ENCODE measurements at regions of chr1 and their contacts with region 1.

Region 1: GRCh38 chr1:40338745-40339424 is 21.8 kb upstream of the COL9A2 start:
- DNase-seq: peak; percentile 73 to 80
- ATAC-seq: peak; percentile 86 to 95
- H3K4me3 ChIP-seq: peak overlapping the region; percentile 36
- H3K27ac ChIP-seq: no peak overlapping the region
- H3K4me1 ChIP-seq: no peaks in the 10 kb centered on the region
- CTCF ChIP-seq: peak; percentile 81
- EP300 ChIP-seq: no peak
- POLR2A ChIP-seq: no peak
- RAD21 ChIP-seq: peak; percentile 86 to 94

Region 2: DNA sequence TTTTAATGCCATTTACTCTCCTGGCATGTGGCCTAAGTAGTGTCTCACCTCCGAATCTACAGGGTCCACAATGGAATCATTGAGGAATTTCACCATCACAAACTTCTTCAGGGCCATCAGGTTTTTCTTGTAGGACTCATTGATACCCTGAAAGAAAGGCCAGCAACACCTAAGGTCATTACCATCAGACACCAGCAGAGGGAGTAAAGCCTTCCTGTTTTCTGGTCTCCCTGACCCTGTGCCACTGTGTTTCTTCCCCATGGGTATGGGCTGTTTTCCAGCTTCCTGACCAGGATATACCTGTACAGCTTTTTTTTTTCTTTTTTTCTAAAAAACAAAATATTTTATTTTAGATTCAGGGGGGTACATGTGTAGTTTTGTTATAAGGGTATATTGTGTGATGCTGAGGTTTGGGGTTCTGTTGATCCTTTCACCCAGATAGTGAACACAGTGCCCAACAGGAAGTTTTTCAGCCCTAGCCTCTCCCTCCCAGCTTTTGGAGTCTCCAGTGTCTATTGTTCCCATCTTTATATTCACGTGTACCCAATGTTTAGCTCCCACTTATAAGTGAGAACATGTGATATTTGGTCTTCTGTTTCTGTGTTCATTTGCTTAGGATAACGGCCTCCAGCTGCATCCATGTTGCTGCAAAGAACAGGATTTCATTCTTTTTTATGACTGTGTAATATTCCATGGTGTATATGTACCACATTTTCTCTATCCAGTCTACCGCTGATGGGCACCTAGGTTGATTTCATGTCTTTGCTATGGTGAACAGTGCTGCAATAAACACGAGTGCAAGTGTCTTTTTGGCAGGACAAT is 260.2 kb before region 1 on chr1:
- CTCF ChIA-PET with region 1: interaction called, 27 read pairs
- POLR2A ChIA-PET with region 1: no interaction called
- DNase-seq: peak; percentile 47 to 66
- ATAC-seq: peak; percentile 88 to 92
- H3K4me3 ChIP-seq: no peak overlapping the region
- H3K27ac ChIP-seq: no peak overlapping the region
- H3K4me1 ChIP-seq: peaks cover 4% of the 10 kb centered on the region; the same call in 1 of the 3 replicates
- CTCF ChIP-seq: peak; percentile 57
- EP300 ChIP-seq: no peak
- POLR2A ChIP-seq: no peak
- RAD21 ChIP-seq: peak; percentile 33 to 50; a peak in 4 of 5 replicates

Region 3: GRCh38 chr1:40143891-40144575 is 194.9 kb before region 1 on chr1:
- CTCF ChIA-PET with region 1: interaction called, 48 read pairs
- POLR2A ChIA-PET with region 1: no interaction called
- DNase-seq: peak; percentile 36 to 65
- ATAC-seq: peak; percentile 87 to 89
- H3K4me3 ChIP-seq: no peak overlapping the region
- H3K27ac ChIP-seq: no peak overlapping the region
- H3K4me1 ChIP-seq: peaks cover 14% of the 10 kb centered on the region
- CTCF ChIP-seq: peak; percentile 70
- EP300 ChIP-seq: no peak
- POLR2A ChIP-seq: no peak
- RAD21 ChIP-seq: peak; percentile 73 to 74

Region 4: GRCh38 chr1:40315239-40315794 is 23.6 kb before region 1 on chr1:
- CTCF ChIA-PET with region 1: interaction called, 17 read pairs
- POLR2A ChIA-PET with region 1: no interaction called
- DNase-seq: peak; percentile 58 to 81
- ATAC-seq: peak; percentile 75 to 89
- H3K4me3 ChIP-seq: peak overlapping the region; percentile 28; the same call in 2 of the 3 replicates
- H3K27ac ChIP-seq: peak overlapping the region in 1 of 2 experiments; percentile 79; a peak in 2 of 6 replicates
- H3K4me1 ChIP-seq: no peaks in the 10 kb centered on the region
- CTCF ChIP-seq: peak; percentile 59
- EP300 ChIP-seq: no peak
- POLR2A ChIP-seq: no peak
- RAD21 ChIP-seq: peak; percentile 42 to 48

Region 5: GRCh38 chr1:40404670-40405462 is 66.0 kb after region 1 on chr1:
- CTCF ChIA-PET with region 1: interaction called, 12 read pairs
- POLR2A ChIA-PET with region 1: no interaction called
- DNase-seq: peak; percentile 13 to 54
- ATAC-seq: peak; percentile 43 to 63; a peak in 2 of 6 replicates
- H3K4me3 ChIP-seq: no peak overlapping the region
- H3K27ac ChIP-seq: no peak overlapping the region
- H3K4me1 ChIP-seq: no peaks in the 10 kb centered on the region
- CTCF ChIP-seq: peak; percentile 80
- EP300 ChIP-seq: no peak
- POLR2A ChIP-seq: no peak
- RAD21 ChIP-seq: peak; percentile 75 to 76

Region 6: DNA sequence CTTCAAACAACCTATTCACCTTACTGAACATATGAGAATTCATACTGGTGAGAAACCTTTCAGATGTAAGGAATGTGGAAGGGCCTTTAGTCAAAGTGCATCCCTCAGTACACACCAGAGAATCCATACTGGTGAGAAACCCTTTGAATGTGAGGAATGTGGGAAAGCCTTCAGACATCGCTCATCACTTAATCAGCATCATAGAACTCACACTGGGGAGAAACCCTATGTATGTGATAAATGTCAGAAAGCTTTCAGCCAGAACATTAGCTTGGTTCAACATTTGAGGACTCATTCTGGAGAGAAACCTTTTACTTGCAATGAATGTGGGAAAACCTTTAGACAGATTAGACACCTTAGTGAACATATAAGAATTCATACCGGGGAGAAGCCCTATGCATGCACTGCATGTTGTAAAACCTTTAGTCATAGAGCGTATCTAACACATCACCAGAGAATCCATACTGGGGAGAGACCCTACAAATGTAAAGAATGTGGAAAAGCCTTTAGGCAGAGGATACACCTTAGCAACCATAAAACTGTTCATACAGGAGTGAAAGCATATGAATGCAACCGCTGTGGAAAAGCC is 156.5 kb after region 1 on chr1:
- CTCF ChIA-PET with region 1: no interaction called
- POLR2A ChIA-PET with region 1: no interaction called
- DNase-seq: peak in 1 of 2 experiments; percentile 5
- ATAC-seq: no peak
- H3K4me3 ChIP-seq: no peak overlapping the region
- H3K27ac ChIP-seq: no peak overlapping the region
- H3K4me1 ChIP-seq: no peaks in the 10 kb centered on the region
- CTCF ChIP-seq: no peak
- EP300 ChIP-seq: no peak
- POLR2A ChIP-seq: no peak
- RAD21 ChIP-seq: no peak

Measured in A549 (cell line).